Activated T-helper 2 cell treated with anti-CD3 and anti-CD28 coated beads, Interferon-gamma antibody, Interleukin-2, Interleukin-4, amounts not matched to agents 10 μg/mL and 5 μg/mL and 100 μg/mL, durations not matched to agents 14 hours and 24 hours and 36 hours (primary cell): ENCODE measurements at regions of chr19 and their contacts with region 1.

Region 1: GRCh38 chr19:43934985-43935708 is at the start of gene ZNF45:
- DNase-seq: peak; percentile 78
- H3K4me3 Mint-ChIP-seq: peak within 1 kb of the TSS; percentile 97
- H3K27ac Mint-ChIP-seq: peak within 1 kb of the TSS; percentile 90
- H3K4me1 Mint-ChIP-seq: peaks cover 10% of the 10 kb centered on the region
- H3K27me3 Mint-ChIP-seq: no peaks in the 10 kb centered on the region
- total RNA-seq, gene ZNF45: 11.1 and 12.2 TPM in 2 replicates

Region 2: DNA sequence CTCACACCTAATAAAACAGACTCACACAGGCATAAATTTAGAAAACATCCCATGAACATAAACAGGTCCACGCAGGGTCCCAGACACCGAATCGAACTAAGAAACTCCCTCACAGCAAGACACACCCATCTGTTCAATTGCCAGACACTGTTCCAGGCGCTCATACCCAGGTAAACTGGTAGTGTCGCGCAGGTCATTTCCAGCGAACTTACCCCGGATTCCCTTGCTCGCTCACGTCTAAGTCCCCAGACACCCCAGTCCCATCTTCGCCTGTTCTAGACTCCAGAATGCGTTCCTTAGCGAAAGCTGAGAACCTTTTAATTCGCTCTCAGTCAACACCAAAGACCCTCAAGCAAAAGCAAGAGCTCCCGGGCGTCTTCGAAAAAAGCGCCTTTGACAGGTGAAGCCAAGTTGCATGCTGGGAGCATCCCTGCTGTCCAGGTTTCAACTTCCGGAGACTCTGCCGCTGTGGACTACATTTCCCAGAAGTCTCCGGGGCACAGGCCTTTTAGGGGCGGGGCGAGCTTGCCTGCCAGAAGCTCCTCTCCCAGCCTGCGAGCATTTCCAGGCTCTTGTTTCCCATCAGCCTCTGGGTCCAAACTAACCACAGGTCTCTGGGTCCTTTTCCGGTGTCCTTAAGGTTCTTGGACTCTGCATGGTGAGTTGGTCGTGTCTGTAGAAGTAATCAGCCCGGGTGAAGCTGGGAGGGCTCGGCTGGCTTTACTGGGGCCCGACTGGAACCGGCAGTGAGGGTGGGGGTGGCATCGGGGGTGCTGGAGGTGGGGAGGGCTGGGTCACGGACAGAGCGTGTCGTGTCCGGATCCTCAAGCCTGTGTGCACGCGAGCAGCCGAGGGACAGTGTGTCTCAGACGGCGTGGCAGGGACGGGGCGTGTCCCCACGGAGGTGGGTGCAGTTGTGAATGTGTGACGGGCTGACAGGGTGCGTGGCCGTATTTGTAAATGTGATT is 108.1 kb before region 1 on chr19 and contains the start of gene ZNF283:
- intact Hi-C with region 1: loop called (anchors 1 kb)
- DNase-seq: peak; percentile 74
- H3K4me3 Mint-ChIP-seq: peak within 1 kb of the TSS; percentile 88
- H3K27ac Mint-ChIP-seq: peak within 1 kb of the TSS; percentile 54
- H3K4me1 Mint-ChIP-seq: peaks cover 17% of the 10 kb centered on the region
- H3K27me3 Mint-ChIP-seq: peaks cover 1% of the 10 kb centered on the region
- total RNA-seq, gene ZNF283: 3.6 and 4.6 TPM in 2 replicates

Region 3: DNA sequence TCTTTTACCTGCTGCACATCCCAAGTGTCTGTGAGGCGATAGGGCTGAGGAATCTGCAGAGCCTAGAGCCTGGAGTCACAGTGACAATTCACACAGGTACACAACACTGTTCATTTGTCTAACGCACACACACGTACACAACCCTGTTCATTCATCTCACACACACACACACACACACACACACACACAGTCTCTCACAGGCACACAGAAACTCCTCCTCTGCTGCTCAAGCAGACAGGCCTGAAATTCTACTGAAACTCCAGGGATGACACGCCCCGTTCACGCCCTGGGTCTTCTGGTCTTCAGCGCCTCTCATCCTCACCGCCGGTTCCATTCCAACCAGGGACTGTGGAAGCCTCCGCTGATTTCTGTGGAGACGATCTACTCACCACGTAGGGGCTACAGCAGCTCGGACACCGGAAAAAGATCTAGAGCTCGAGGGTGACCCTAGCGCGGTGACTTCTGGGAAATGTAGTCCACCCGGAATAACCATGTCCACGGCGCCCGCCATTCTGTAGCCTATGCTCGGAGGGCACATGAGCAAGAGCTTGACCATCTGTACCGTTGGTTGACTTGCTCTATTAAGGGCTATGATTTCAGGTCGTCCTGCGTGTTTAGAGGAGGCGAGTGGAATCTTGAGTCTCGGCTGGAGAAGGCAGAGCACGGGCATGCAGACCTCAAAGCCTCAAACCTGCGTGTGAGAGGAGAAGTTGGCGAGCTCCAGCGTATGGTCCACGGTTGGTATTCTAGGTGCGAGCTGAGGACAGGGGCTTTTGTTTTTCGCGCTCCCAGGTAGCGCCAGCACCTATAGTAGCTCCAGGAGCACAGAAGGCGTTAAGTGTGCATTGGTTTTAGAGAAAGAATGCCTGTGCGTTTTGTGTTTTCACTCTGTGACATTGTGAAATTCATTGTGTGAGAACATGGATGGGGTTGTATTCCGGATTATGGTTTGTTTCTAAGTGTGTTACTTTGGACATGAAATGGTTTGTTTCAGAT is 33.5 kb before region 1 on chr19:
- intact Hi-C with region 1: no loop called
- DNase-seq: peak; percentile 40
- H3K4me3 Mint-ChIP-seq: peak overlapping the region; percentile 86
- H3K27ac Mint-ChIP-seq: peak overlapping the region; percentile 45
- H3K4me1 Mint-ChIP-seq: peaks cover 11% of the 10 kb centered on the region
- H3K27me3 Mint-ChIP-seq: no peaks in the 10 kb centered on the region

Region 4: GRCh38 chr19:43950834-43951645 is 15.9 kb after region 1 on chr19 and contains the start of gene ZNF221:
- intact Hi-C with region 1: loop called (anchors 1 kb)
- DNase-seq: peak; percentile 53
- H3K4me3 Mint-ChIP-seq: peak within 1 kb of the TSS; percentile 92
- H3K27ac Mint-ChIP-seq: peak within 1 kb of the TSS; percentile 50
- H3K4me1 Mint-ChIP-seq: peaks cover 4% of the 10 kb centered on the region
- H3K27me3 Mint-ChIP-seq: no peaks in the 10 kb centered on the region
- total RNA-seq, gene ZNF221: 0.92 and 1.4 TPM in 2 replicates

Region 5: DNA sequence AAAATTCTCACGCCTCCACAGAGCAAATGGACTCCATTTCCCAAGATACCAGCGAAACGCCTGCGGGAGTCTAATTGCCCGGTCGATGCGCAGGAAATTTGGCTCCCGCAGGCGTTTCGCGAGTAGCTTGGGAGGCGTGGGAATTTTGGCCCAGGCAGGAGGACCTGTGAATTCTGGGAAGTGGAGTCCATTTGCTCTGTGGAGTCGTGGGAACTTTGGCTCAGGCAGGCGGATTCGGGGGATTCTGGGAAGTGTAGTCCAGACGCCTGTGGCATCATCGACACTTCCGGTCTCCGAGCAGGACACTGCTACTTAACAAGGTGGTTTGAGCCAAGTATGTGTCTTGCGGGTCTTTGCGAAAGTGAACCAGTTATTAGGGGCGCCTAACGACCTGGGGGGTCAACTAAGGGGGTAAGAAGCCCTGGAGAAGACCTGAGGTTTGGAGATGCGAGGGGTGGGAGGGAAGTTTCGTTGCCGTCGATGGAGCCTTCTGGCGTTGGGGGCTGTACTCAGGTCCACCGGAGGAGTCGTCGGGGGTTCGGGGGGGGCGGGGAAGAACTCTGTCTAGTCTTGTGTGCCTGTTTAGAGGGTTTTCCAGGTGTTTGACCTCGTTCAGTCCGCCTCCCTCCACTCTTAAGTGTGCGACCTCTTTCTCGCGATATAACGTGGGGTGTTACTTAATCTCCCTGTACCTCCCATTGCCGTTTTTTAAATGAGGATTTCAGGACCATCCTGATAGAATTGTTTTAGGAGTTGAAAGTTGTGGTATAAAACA is 49.0 kb after region 1 on chr19 and contains the start of gene ZNF155:
- intact Hi-C with region 1: loop called (anchors 1 kb)
- DNase-seq: peak; percentile 59
- H3K4me3 Mint-ChIP-seq: peak within 1 kb of the TSS; percentile 95
- H3K27ac Mint-ChIP-seq: peak within 1 kb of the TSS; percentile 90
- H3K4me1 Mint-ChIP-seq: peaks cover 9% of the 10 kb centered on the region
- H3K27me3 Mint-ChIP-seq: no peaks in the 10 kb centered on the region
- total RNA-seq, gene ZNF155: 4.7 and 5.5 TPM in 2 replicates